Endothelial cell of umbilical vein (primary cell): ENCODE measurements at regions of chr1 and their contacts with region 1.

Region 1: GRCh38 chr1:153749408-153750005 is 21.7 kb downstream of the INTS3 start:
- DNase-seq: peak; percentile 88
- H3K4me3 ChIP-seq: no peak overlapping the region
- H3K27ac ChIP-seq: peak overlapping the region; percentile 36
- H3K4me1 ChIP-seq: peaks cover 37% of the 10 kb centered on the region
- H3K27me3 ChIP-seq: no peaks in the 10 kb centered on the region
- CTCF ChIP-seq: peak; percentile 94 to 96
- POLR2A ChIP-seq: no peak

Region 2: GRCh38 chr1:153677718-153678505 is 71.6 kb before region 1 on chr1:
- CTCF ChIA-PET with region 1: interaction called, 29 read pairs
- POLR2A ChIA-PET with region 1: no interaction called
- dilution Hi-C with region 1: no loop called
- intact Hi-C with region 1: loop called (anchors 1 kb)
- DNase-seq: peak; percentile 72
- H3K4me3 ChIP-seq: peak overlapping the region; percentile 15 to 44 (median 22)
- H3K27ac ChIP-seq: no peak overlapping the region
- H3K4me1 ChIP-seq: peaks cover 11% of the 10 kb centered on the region
- H3K27me3 ChIP-seq: peaks cover 4 to 5% of the 10 kb centered on the region in 2 experiments
- CTCF ChIP-seq: peak; percentile 91 to 92
- POLR2A ChIP-seq: no peak

Region 3: DNA sequence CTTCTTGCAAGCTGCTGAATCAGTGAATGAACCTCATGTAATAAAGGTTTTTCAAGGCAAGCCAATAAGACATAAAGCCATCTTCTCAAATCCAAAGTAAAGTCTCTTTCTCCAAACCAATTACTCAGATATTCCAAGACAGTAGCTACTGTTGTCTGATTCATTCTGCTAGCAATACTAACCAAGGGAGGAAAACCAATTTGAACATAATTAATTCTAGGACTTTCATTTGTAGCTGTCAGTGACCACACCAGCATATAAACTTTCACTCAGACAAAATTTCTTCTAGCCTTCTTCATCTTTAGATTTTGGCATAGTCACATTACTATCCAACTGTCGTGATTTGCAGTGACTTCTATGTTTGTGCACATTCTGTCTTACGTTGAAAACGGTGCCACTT is 32.2 kb before region 1 on chr1:
- CTCF ChIA-PET with region 1: no interaction called
- POLR2A ChIA-PET with region 1: no interaction called
- dilution Hi-C with region 1: no loop called
- intact Hi-C with region 1: no loop called
- DNase-seq: no peak
- H3K4me3 ChIP-seq: no peak overlapping the region
- H3K27ac ChIP-seq: no peak overlapping the region
- H3K4me1 ChIP-seq: no peaks in the 10 kb centered on the region
- H3K27me3 ChIP-seq: peaks cover 0 to 2% of the 10 kb centered on the region in 2 experiments
- CTCF ChIP-seq: no peak
- POLR2A ChIP-seq: no peak

Region 4: GRCh38 chr1:153727463-153728304 is 21.8 kb before region 1 on chr1 and contains the start of gene INTS3:
- CTCF ChIA-PET with region 1: interaction called, 5 read pairs
- POLR2A ChIA-PET with region 1: interaction called, 8 read pairs
- dilution Hi-C with region 1: no loop called
- intact Hi-C with region 1: loop called (anchors 1 kb)
- DNase-seq: peak; percentile 100
- H3K4me3 ChIP-seq: peak within 1 kb of the TSS; percentile 57 to 68 (median 59)
- H3K27ac ChIP-seq: peak within 1 kb of the TSS; percentile 77
- H3K4me1 ChIP-seq: peaks cover 18% of the 10 kb centered on the region
- H3K27me3 ChIP-seq: no peaks in the 10 kb centered on the region
- CTCF ChIP-seq: no peak
- POLR2A ChIP-seq: peak; percentile 82
- total RNA-seq, gene INTS3: 56.1 and 63.1 TPM in 2 replicates

Region 5: GRCh38 chr1:153775458-153776327 is 26.2 kb after region 1 on chr1:
- CTCF ChIA-PET with region 1: interaction called, 8 read pairs
- POLR2A ChIA-PET with region 1: interaction called, 4 read pairs
- dilution Hi-C with region 1: no loop called
- intact Hi-C with region 1: loop called (anchors 1 kb)
- DNase-seq: peak; percentile 58
- H3K4me3 ChIP-seq: peak overlapping the region; percentile 25 to 63 (median 49)
- H3K27ac ChIP-seq: no peak overlapping the region
- H3K4me1 ChIP-seq: peaks cover 54% of the 10 kb centered on the region
- H3K27me3 ChIP-seq: no peaks in the 10 kb centered on the region
- CTCF ChIP-seq: no peak
- POLR2A ChIP-seq: no peak

Region 6: DNA sequence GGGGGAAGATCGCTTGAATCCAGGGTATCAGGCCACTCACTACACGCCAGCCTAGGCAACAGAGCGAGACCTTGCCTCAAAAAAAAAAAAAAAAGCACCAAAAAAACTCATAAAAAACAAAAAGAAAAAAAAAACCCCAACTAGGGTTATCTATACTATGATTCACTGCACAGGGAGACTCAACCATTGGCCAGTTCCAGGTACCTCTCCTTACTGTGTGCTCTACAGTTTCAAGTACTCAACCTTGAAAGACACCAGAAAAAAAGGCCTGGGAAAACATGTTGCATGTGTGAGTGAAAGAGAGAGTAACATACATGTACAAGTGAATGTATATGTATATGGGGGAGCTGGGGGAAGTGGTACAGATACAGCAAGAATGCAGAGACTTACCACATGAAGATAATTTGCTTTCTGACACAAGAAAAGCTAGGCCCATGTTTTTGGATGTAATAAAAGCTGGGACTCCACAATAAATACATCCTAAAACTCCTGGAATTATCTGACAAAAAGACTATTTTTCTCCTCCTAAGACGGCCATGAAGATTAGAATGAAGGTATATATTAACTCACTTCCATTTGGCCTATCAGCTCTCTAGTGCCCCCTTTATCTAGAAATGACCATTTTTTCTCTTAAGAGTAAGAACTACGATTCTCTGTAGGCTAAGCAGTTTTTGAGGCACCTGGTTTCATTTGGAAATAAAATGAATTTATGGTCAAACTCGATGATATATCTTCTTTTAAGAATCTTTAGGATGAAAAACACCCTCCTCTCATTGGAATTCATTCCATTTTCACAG is 77.9 kb after region 1 on chr1:
- CTCF ChIA-PET with region 1: no interaction called
- POLR2A ChIA-PET with region 1: no interaction called
- dilution Hi-C with region 1: no loop called
- intact Hi-C with region 1: no loop called
- DNase-seq: no peak
- H3K4me3 ChIP-seq: no peak overlapping the region
- H3K27ac ChIP-seq: no peak overlapping the region
- H3K4me1 ChIP-seq: no peaks in the 10 kb centered on the region
- H3K27me3 ChIP-seq: no peaks in the 10 kb centered on the region
- CTCF ChIP-seq: no peak
- POLR2A ChIP-seq: no peak